B cell (primary cell): ENCODE measurements at regions of chr1 and their contacts with region 1.

Region 1: DNA sequence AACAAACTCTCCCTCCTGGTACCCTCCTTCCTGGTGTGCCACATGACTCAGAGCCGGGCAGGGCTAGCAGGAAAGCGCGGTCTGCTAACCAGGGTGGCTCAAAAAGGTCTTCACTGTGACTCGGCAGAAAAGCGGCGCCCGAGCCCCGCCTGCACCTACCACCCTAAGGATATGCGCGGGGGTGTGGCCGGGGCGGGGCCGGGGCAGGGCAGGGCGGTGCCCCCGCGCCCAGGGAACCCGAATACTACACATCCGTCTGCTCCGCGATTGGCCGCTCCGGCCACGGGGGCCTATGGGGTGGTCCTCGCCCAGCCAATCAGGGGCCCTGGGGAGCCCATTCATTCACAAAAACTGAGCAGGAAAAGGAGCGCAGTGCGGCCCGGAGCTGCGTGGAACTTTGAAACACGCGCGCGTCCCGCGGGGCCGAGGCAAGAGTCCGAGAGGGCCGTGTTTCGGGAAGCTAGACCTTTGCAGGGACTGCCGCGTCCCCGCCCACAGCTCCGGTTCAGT is 1.7 kb downstream of the LRP8 start:
- DNase-seq: peak; percentile 92
- ATAC-seq: peak; percentile 88
- H3K4me3 ChIP-seq: peak overlapping the region in 4 of 5 experiments; percentile 80 to 96 (median 86)
- H3K4me3 Mint-ChIP-seq: peak overlapping the region; percentile 97
- H3K27ac ChIP-seq: peak overlapping the region in 1 of 2 donors; percentile 21
- H3K27ac Mint-ChIP-seq: peak overlapping the region; percentile 91
- H3K4me1 ChIP-seq: peaks cover 6 to 25% of the 10 kb centered on the region in 2 donors
- H3K4me1 Mint-ChIP-seq: peaks cover 24% of the 10 kb centered on the region
- H3K27me3 ChIP-seq: no peaks in the 10 kb centered on the region
- H3K27me3 Mint-ChIP-seq: no peaks in the 10 kb centered on the region
- CTCF ChIP-seq: no peak

Region 2: GRCh38 chr1:53014791-53015507 is 311.2 kb before region 1 on chr1:
- CTCF ChIA-PET with region 1: no interaction called
- POLR2A ChIA-PET with region 1: no interaction called
- intact Hi-C with region 1: loop called (anchors 10 kb)
- DNase-seq: peak; percentile 86
- ATAC-seq: peak; percentile 96
- H3K4me3 ChIP-seq: peak overlapping the region; percentile 45 to 88 (median 62)
- H3K4me3 Mint-ChIP-seq: peak overlapping the region; percentile 87
- H3K27ac ChIP-seq: peak overlapping the region in 1 of 2 donors; percentile 13
- H3K27ac Mint-ChIP-seq: peak overlapping the region; percentile 62
- H3K4me1 ChIP-seq: peaks cover 19 to 20% of the 10 kb centered on the region in 2 donors
- H3K4me1 Mint-ChIP-seq: peaks cover 27% of the 10 kb centered on the region
- H3K27me3 ChIP-seq: no peaks in the 10 kb centered on the region
- H3K27me3 Mint-ChIP-seq: no peaks in the 10 kb centered on the region
- CTCF ChIP-seq: no peak

Region 3: DNA sequence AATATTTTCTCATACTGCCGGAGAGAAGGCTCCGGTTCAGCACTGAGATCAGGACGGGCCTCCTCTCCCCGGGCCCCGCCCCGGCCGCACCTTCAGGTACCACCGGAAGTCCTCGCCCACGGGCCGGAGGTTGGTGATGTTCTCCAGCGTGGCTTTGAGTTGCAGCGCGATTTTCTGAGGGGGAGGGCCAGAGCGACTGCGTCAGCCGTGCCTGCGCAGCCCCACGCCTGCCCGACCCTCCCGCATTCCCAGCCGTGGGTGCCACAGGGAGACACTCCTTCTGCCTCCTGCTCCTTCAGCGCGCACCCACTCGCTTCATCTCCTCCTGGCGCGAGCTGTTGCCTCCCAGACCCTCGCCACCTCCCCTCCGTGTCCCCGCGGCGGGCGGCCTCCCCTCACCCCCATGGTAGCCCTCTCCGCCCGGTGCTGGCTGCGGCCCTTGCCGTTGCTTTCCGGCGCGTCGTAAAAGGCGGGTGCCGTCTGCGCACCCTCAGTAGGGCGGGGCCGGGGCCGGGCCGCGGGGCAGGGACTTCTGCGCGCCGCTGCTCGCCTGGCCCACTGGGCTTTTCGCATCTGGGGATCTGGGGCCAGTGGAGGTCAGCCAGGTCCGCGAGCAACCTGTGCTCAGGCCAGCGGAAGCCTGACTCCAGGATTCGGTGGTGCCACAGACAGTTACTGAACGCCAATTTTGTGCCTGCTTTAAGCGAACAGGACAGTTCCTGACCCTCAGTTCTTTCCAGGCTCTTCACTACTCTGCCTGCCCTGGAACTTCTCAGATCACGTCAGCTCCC is 105.8 kb before region 1 on chr1 and contains the start of gene CZIB:
- CTCF ChIA-PET with region 1: no interaction called
- POLR2A ChIA-PET with region 1: no interaction called
- intact Hi-C with region 1: loop called (anchors 1 kb)
- DNase-seq: peak; percentile 96
- ATAC-seq: peak; percentile 92
- H3K4me3 ChIP-seq: peak within 1 kb of the TSS; percentile 43 to 91 (median 66)
- H3K4me3 Mint-ChIP-seq: peak within 1 kb of the TSS; percentile 97
- H3K27ac ChIP-seq: peak within 1 kb of the TSS; percentile 85 to 87
- H3K27ac Mint-ChIP-seq: peak within 1 kb of the TSS; percentile 99
- H3K4me1 ChIP-seq: peaks cover 13 to 17% of the 10 kb centered on the region in 2 donors
- H3K4me1 Mint-ChIP-seq: peaks cover 20% of the 10 kb centered on the region
- H3K27me3 ChIP-seq: no peaks in the 10 kb centered on the region
- H3K27me3 Mint-ChIP-seq: no peaks in the 10 kb centered on the region
- CTCF ChIP-seq: no peak
- total RNA-seq, gene CZIB: 62.0 and 62.1 TPM in 2 replicates

Region 4: DNA sequence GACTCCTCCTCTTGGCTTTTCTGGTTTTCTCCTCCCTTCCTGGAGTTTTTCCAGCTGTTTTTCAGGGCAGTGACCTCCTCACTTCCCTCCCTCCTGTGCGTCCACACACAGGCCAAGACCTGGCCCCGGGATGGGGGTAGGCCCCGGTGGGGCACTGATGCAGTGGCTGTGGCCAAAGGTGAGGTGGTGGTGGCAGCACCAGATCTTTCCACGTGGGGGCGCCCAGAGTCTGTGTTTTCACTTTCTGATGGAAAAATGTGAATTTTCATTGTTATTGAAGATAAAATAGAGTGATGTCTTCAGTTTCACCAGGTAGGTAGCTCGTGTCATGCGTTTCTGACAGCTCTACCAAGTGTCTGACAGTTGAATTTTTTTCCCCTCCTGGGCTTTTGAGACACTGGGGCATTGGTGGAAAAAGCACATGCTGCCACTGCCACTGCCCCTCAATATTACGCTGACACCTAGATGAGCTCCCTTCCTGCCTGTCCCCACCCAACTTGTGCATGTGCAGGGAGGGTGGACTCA is 47.9 kb before region 1 on chr1:
- CTCF ChIA-PET with region 1: interaction called, 6 read pairs
- POLR2A ChIA-PET with region 1: no interaction called
- intact Hi-C with region 1: loop called (anchors 1 kb)
- DNase-seq: peak; percentile 73
- ATAC-seq: peak; percentile 90
- H3K4me3 ChIP-seq: no peak overlapping the region
- H3K4me3 Mint-ChIP-seq: no peak overlapping the region
- H3K27ac ChIP-seq: no peak overlapping the region
- H3K27ac Mint-ChIP-seq: no peak overlapping the region
- H3K4me1 ChIP-seq: no peaks in the 10 kb centered on the region
- H3K4me1 Mint-ChIP-seq: no peaks in the 10 kb centered on the region
- H3K27me3 ChIP-seq: no peaks in the 10 kb centered on the region
- H3K27me3 Mint-ChIP-seq: no peaks in the 10 kb centered on the region
- CTCF ChIP-seq: peak; percentile 96

Region 5: DNA sequence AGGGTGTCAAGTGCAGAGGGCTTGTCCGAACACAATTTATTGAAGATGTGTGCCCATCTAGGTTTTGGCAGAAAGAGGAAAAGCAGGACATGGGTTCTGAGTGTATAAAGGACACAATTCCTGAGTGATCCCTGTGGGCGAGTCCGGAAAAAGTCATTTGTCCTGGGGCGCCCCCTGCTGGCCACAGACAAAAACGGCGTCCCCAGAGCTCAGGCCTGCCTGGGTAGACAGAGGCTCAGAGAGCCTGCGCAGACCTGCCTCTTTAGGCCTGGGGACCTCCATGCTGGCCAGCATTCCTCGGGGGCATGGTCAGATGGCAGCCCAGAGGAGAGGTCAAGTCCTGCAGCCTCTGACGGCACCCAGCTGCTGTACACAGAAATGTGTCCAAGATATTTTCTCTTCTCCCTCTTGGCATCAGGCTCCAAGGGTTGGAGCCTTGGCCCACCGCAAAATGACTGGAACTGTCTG is 67.2 kb after region 1 on chr1:
- CTCF ChIA-PET with region 1: interaction called, 15 read pairs
- POLR2A ChIA-PET with region 1: interaction called, 3 read pairs
- intact Hi-C with region 1: loop called (anchors 2 kb)
- DNase-seq: peak; percentile 75
- ATAC-seq: peak; percentile 72
- H3K4me3 ChIP-seq: no peak overlapping the region
- H3K4me3 Mint-ChIP-seq: no peak overlapping the region
- H3K27ac ChIP-seq: no peak overlapping the region
- H3K27ac Mint-ChIP-seq: no peak overlapping the region
- H3K4me1 ChIP-seq: peaks cover 9 to 13% of the 10 kb centered on the region in 2 donors
- H3K4me1 Mint-ChIP-seq: peaks cover 16% of the 10 kb centered on the region
- H3K27me3 ChIP-seq: no peaks in the 10 kb centered on the region
- H3K27me3 Mint-ChIP-seq: no peaks in the 10 kb centered on the region
- CTCF ChIP-seq: peak; percentile 96